ENCODE measurements at regions of chr9 and their contacts with region 1.

Region 1: DNA sequence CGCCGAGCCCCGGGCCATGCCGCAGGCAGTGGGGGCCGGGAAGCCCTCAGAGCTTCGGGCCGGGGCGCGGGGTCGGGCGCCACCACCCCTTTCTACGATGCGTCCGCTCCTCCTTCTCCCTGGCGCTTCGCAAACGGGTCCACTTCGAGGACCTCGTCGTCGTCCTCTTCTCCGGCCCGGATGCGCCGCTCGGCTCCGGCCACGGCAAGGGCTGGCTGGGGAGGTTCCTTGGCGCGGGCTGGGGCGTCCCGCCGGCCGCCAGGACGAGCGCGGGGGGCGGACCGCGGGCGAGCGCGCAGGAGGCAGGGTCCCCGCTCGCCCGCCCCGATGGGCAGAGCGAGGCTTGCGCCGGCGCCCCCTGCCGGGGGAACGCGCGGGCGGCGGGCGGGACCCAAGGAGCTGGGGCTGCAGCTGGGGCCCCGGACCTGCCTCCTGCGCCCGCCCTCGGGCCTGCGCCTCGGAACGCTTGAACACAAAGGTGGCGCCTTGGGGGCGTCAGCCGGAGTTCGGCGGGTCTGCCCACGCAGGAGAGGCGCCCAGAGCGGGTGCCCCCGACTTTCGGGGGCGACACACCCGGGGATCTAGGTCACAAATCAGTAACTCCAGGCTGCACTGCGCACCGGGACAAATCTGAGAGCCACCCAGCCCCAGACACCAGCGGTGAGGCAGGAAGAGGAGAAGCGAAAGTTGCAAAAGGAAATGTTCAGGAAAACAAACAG is at the start of gene ROR2:
- DNase-seq: peak; percentile 53 to 74
- ATAC-seq: peak; percentile 79
- total RNA-seq, gene ROR2: 6.2 to 8.3 TPM

Region 2: DNA sequence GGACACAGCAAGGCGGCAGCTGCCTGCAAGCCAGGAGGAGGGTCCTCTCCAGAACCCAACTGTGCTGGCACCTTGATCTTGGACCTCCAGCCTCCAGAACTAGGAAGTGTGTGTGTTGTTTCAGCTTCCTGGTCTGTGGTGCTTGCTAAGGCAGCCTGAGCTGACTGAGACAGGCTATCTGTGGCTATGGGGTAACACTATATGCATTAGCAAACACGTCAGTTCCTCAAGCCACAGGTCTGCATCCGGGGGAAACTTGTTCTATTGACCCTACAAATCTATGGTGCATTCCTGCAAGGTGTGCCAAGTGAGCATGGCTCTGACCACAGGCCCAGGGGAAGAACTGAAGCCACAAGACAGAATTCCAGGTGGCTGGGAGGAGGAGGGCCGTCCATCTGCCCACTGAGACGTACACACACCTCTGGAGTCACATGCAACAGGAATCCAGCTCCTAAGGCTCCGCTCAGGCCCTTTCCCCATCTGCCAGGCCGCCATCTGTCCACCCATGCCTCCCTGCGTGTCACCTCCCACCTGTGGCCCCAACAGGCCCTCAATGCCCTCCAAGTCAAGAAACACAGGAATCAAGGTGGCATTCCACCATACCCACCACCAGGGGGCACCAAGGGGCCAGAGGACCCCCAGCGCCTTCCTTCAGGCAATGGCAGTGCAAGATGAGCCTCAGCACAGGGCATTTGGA is 174.9 kb before region 1 on chr9:
- intact Hi-C with region 1: loop called in 1 of 2 experiments (anchors 10 kb)
- DNase-seq: peak; percentile 59 to 68
- ATAC-seq: peak; percentile 74

Region 3: GRCh38 chr9:91837981-91838731 is 111.9 kb before region 1 on chr9:
- intact Hi-C with region 1: no loop called
- DNase-seq: peak; percentile 71 to 84
- ATAC-seq: peak; percentile 93